ENCODE measurements at regions of chr7 and their contacts with region 1.

Region 1: DNA sequence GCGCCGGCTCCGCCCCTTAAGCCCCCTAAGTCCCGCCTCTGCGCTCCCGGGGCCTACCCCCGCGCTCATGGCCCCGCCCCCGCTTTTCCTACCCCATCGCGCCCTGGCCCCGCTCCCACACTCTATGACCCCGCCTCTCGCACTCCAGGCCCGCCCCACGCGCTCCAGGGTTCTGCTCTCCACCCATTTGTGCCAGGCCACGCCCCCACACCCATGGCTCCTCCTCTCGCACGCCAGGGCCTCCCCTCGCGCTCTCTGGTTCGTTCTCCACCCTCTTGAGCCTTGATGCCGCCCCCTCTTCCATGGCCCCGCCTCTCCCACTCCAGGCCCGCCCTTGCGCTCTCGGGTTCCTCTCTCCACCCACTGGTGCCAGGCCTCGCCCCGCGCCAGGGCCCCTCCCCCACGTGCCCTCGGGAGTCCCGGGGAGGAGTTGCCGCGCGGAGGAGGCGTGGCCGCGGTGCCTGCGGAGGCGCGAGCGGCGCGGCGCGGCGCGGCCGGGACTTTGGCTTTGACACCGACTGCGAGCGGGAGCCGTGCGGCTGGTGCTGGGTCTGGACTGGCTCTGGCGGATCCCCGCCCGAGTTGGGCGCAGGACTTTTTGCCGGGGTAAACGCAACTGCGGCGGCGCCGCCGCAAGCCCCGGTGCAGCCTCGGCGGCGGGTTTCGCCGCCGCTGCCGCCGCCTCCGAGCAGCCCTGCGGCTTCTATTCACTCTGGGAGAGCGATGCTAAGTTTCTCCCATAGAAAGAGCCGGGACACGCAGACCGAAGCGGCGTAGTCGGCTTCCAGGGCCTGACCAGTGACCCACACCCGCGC is at the start of gene EEPD1:
- DNase-seq: peak; percentile 100
- H3K4me3 ChIP-seq: peak within 1 kb of the TSS; percentile 94
- H3K27ac ChIP-seq: peak within 1 kb of the TSS; percentile 92
- H3K4me1 ChIP-seq: no peaks in the 10 kb centered on the region
- H3K27me3 ChIP-seq: no peaks in the 10 kb centered on the region
- CTCF ChIP-seq: no peak
- total RNA-seq, gene EEPD1: 8.2 to 10.0 TPM

Region 2: DNA sequence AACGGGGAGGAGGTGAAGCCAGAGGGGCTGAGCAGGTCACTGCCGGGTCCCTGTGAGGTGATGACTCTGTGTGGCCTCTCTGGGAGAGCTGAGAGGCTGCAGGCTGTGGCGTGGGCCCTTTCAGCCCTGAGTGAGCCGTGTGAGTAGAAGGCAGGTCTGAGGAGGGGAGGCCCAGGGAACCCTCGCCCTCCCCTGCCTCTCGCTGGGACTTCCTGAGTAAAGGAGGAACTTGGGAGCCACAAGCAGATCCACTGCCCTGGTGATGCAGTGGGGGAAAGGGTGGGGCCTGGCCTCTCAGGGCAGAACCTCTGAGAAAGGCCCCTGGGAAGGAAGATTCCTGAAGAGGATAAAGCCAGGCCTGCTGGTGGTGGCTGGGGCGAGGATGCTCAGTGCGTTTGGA is 22.9 kb after region 1 on chr7:
- intact Hi-C with region 1: no loop called
- DNase-seq: no peak
- H3K4me3 ChIP-seq: no peak overlapping the region
- H3K27ac ChIP-seq: no peak overlapping the region
- H3K4me1 ChIP-seq: no peaks in the 10 kb centered on the region
- H3K27me3 ChIP-seq: no peaks in the 10 kb centered on the region
- CTCF ChIP-seq: no peak

Region 3: DNA sequence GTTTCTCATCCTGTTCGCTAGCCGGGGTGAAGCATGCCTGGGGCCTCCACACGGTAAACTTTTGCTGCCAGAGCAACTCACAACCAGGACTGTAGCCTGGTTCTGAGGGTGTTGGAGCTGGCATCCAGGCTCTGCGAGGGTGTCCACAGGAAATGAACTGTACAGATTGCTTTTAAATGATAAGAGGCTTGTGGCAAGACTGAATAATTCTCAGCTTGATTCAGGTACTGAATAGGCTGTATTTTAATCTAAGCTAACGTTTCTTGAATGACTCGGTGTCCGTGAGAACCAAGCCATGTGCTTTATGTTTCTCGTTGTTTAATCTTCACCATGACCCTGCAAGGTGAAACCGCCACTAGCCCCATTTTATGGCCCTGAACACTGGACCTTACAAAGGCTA is 49.4 kb after region 1 on chr7:
- intact Hi-C with region 1: loop called (anchors 5 kb)
- DNase-seq: no peak
- H3K4me3 ChIP-seq: no peak overlapping the region
- H3K27ac ChIP-seq: no peak overlapping the region
- H3K4me1 ChIP-seq: no peaks in the 10 kb centered on the region
- H3K27me3 ChIP-seq: no peaks in the 10 kb centered on the region
- CTCF ChIP-seq: no peak

Region 4: GRCh38 chr7:36280840-36281812 is 128.2 kb after region 1 on chr7:
- intact Hi-C with region 1: loop called (anchors 10 kb)
- DNase-seq: peak; percentile 78
- H3K4me3 ChIP-seq: no peak overlapping the region
- H3K27ac ChIP-seq: peak overlapping the region; percentile 51
- H3K4me1 ChIP-seq: peaks cover 9% of the 10 kb centered on the region
- H3K27me3 ChIP-seq: no peaks in the 10 kb centered on the region
- CTCF ChIP-seq: no peak

Measured in colonic mucosa (tissue), 4 donors.